ENCODE measurements at regions of chr17 and their contacts with region 1.

Region 1: GRCh38 chr17:40317880-40318829 is 9.2 kb downstream of the RARA start:
- DNase-seq: peak; percentile 91 to 94 (median 93)
- H3K4me3 ChIP-seq: peak overlapping the region; percentile 61 to 89 (median 76)
- H3K27ac ChIP-seq: peak overlapping the region; percentile 40 to 89
- H3K4me1 ChIP-seq: peaks cover 19 to 98% (median 93%) of the 10 kb centered on the region in 4 experiments
- H3K27me3 ChIP-seq: no peaks in the 10 kb centered on the region

Region 2: GRCh38 chr17:40303009-40303657 is 15.0 kb before region 1 on chr17:
- CTCF ChIA-PET with region 1: interaction called, 130 read pairs
- POLR2A ChIA-PET with region 1: interaction called, 10 read pairs
- DNase-seq: peak; percentile 82 to 88 (median 83)
- H3K4me3 ChIP-seq: no peak overlapping the region
- H3K27ac ChIP-seq: no peak overlapping the region
- H3K4me1 ChIP-seq: peaks cover 16 to 39% (median 26%) of the 10 kb centered on the region in 4 experiments
- H3K27me3 ChIP-seq: no peaks in the 10 kb centered on the region

Region 3: DNA sequence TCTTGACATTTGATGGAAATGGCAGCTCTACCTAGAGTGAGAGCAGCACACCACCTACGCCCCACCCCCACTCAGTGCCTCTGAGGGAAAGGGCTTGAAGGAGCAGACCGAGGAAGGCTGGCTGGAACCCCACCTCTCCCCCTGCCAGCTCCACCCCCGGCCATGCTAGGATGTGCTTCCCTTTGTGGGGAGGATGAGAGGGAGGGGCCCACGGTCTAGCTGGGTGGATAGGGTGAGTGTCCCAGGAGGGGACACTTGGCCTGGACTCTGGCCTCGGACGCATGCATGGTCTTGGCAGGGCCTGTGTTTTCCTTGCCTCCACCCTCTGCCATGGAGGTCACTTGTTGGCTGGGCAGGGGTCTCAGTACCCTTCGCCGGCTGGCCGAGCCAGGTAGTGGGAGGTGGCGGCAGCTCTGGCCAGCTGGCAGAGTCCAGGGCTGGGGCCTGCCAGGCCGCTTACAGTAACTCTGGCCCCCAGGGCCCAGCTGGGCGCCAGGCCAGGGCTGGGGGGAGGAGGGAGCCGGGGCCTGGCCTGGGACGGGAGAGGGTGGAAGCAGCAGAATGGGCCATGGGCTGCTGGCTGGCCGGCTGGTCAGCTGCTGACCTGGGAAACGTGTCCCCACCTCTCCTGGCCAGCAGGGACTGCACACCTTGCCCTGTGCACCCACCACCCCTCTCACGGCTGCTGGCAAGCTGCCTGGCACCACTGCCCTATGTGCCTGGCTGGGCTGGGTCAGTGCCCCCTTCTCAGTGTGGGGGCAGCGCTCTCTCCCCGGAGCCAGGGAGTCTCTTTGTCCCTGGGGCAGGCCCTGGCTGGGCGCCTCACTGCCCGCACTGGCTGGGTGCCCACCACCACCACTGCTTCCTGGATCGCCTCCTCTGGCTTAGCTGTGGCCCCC is 13.8 kb after region 1 on chr17:
- CTCF ChIA-PET with region 1: interaction called, 24 read pairs
- POLR2A ChIA-PET with region 1: interaction called, 30 read pairs
- DNase-seq: peak in 1 of 3 donors; percentile 30
- H3K4me3 ChIP-seq: peak overlapping the region in 3 of 7 experiments; percentile 19 to 39 (median 33)
- H3K27ac ChIP-seq: no peak overlapping the region
- H3K4me1 ChIP-seq: peaks cover 35 to 92% (median 77%) of the 10 kb centered on the region in 4 experiments
- H3K27me3 ChIP-seq: no peaks in the 10 kb centered on the region

Region 4: DNA sequence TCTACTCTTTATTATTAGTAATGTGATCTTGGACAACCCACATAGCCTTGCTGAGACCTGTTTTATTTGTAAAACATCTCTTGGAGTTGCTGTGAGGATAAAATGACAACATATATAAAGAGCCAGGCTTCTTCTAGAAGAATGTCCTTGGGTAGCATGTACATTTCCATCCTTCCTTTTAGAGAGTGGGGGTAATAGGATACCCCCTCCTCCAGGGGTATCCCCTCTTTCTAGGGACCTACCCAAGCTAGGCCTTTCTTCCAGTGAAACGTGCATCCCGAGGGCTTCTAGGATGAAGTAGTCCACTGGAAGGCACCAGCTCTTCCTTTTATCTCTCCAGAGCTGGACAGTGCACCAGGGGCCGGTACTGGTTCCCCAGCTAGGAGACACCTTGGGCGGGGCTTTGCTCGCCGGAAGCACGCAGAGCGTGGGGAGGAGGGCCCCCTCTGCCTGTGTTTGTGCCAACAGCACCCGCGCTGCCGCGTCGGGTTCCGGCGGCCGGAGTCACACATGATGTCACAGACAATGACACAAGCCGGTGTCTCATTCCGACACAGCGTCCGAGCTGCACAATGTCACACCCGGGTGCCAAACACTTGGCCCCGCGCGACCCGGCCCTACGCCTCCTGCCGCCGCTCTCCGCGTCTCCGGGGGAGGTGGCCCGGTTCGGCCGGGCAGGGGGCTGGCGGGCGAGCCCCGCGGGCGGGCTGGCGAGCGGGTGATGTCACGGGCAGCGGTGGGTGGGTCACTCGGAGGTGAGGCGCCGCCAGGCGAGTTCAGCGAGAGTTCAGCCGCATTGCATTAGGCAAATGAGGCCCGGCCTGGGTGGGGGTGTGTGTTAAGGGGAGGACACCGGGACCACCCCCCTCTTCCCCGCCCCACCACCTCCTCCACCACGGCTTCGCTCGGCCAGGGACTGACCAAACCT is 23.0 kb after region 1 on chr17:
- CTCF ChIA-PET with region 1: interaction called, 1,388 read pairs
- POLR2A ChIA-PET with region 1: interaction called, 195 read pairs
- DNase-seq: peak; percentile 84 to 89 (median 84)
- H3K4me3 ChIP-seq: peak overlapping the region; percentile 40 to 91 (median 76)
- H3K27ac ChIP-seq: peak overlapping the region; percentile 64 to 82
- H3K4me1 ChIP-seq: peaks cover 26 to 95% (median 88%) of the 10 kb centered on the region in 4 experiments
- H3K27me3 ChIP-seq: no peaks in the 10 kb centered on the region

Region 5: GRCh38 chr17:40349920-40350909 is 32.1 kb after region 1 on chr17:
- CTCF ChIA-PET with region 1: interaction called, 1,388 read pairs
- POLR2A ChIA-PET with region 1: interaction called, 195 read pairs
- DNase-seq: no peak
- H3K4me3 ChIP-seq: no peak overlapping the region
- H3K27ac ChIP-seq: no peak overlapping the region
- H3K4me1 ChIP-seq: peaks cover 8 to 82% (median 62%) of the 10 kb centered on the region in 4 experiments
- H3K27me3 ChIP-seq: no peaks in the 10 kb centered on the region

Measured in common myeloid progenitor, CD34-positive (primary cell).